WTC11 (cell line): ENCODE measurements at regions of chr20 and their contacts with region 1.

Region 1: DNA sequence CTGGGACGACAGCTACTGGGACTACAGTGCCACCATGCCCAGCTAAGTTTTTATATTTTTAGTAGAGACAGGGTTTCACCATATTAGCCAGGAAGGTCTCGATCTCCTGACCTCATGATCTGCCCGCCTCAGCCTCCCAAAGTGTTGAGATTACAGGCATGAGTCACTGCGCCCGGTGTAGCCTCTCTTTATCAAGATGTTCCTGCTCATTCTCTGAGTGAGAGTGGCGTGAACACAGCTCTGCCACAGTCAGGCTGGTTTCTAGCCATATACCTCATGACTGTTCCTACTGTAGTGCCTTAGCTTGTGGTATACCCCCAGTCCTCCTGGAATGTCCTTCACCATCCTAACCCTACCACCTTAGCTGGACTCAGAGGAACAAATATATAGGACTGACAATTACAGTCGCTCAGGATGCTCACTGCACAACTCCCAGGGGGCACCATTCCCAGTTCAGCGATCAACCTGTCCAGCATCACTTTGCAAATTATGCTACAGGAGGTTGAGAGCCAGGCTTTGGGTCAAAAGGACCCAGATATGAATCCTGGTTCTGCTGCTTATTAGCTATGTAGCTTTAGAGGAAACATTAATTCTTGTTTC is 86.3 kb downstream of the CHMP4B start:
- DNase-seq: peak; percentile 36
- ATAC-seq: peak; percentile 64
- H3K4me3 Mint-ChIP-seq: no peak overlapping the region
- H3K27ac Mint-ChIP-seq: no peak overlapping the region
- H3K4me1 Mint-ChIP-seq: no peaks in the 10 kb centered on the region
- H3K27me3 Mint-ChIP-seq: peaks cover 5% of the 10 kb centered on the region
- CTCF ChIP-seq: peak; percentile 30; the same call in 1 of the 2 replicates

Region 2: GRCh38 chr20:33811799-33812672 is 85.4 kb before region 1 on chr20:
- CTCF ChIA-PET with region 1: no interaction called
- POLR2A ChIA-PET with region 1: no interaction called
- DNase-seq: no peak
- ATAC-seq: peak; percentile 5
- H3K4me3 Mint-ChIP-seq: peak overlapping the region; percentile 92
- H3K27ac Mint-ChIP-seq: peak overlapping the region; percentile 89
- H3K4me1 Mint-ChIP-seq: peaks cover 15% of the 10 kb centered on the region
- H3K27me3 Mint-ChIP-seq: no peaks in the 10 kb centered on the region
- CTCF ChIP-seq: no peak

Region 3: DNA sequence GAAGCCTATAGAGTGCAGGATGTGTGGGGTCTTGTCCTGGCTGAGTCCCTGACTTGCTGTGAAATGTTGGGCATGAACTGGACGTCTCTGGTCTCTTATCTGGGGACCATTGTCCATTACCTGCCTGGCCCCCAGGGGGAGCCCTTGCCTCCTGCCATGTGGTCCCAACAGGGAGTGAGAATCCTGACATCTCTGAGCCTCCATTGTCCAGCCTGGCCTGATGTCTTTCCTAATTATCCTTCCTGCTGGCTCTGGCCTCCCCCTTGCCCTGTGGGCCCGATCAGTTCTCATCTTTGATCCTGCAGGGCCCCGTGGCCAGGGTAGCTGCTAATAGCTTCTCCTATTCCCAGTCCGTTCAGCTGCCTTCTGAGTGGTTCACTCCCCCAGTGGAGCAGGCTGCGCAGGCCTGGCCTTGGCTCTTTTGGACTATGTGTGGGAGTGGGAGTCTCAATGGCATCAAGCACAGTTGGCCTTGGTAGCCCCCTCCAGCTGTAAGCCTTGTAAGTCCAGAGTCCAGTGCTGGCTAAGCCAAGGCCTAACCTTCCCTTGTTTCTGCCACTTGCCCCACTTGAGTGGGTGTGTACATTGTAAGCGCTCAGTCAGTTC is 18.4 kb after region 1 on chr20:
- CTCF ChIA-PET with region 1: interaction called, 20 read pairs
- POLR2A ChIA-PET with region 1: no interaction called
- DNase-seq: peak; percentile 74
- ATAC-seq: peak; percentile 89
- H3K4me3 Mint-ChIP-seq: no peak overlapping the region
- H3K27ac Mint-ChIP-seq: no peak overlapping the region
- H3K4me1 Mint-ChIP-seq: peaks cover 14% of the 10 kb centered on the region
- H3K27me3 Mint-ChIP-seq: no peaks in the 10 kb centered on the region; the same call in 1 of the 2 replicates
- CTCF ChIP-seq: peak; percentile 80